ENCODE measurements at regions of chr6 and their contacts with region 1.

Region 1: GRCh38 chr6:42230345-42231321 is 13.0 kb upstream of the MRPS10 start:
- DNase-seq: peak in 1 of 2 experiments; percentile 29
- H3K4me3 ChIP-seq: no peak overlapping the region
- H3K4me3 Mint-ChIP-seq: no peak overlapping the region
- H3K27ac Mint-ChIP-seq: peak overlapping the region; percentile 4
- H3K4me1 ChIP-seq: peaks cover 28% of the 10 kb centered on the region
- H3K4me1 Mint-ChIP-seq: peaks cover 37% of the 10 kb centered on the region
- H3K27me3 ChIP-seq: no peaks in the 10 kb centered on the region
- H3K27me3 Mint-ChIP-seq: no peaks in the 10 kb centered on the region
- CTCF ChIP-seq: peak; percentile 57 to 76

Region 2: GRCh38 chr6:42075159-42075838 is 155.3 kb before region 1 on chr6:
- CTCF ChIA-PET with region 1: no interaction called
- POLR2A ChIA-PET with region 1: no interaction called
- intact Hi-C with region 1: loop called (anchors 1 kb)
- DNase-seq: peak; percentile 78 to 87
- H3K4me3 ChIP-seq: no peak overlapping the region
- H3K4me3 Mint-ChIP-seq: no peak overlapping the region
- H3K27ac Mint-ChIP-seq: no peak overlapping the region
- H3K4me1 ChIP-seq: no peaks in the 10 kb centered on the region
- H3K4me1 Mint-ChIP-seq: no peaks in the 10 kb centered on the region
- H3K27me3 ChIP-seq: no peaks in the 10 kb centered on the region
- H3K27me3 Mint-ChIP-seq: no peaks in the 10 kb centered on the region
- CTCF ChIP-seq: peak; percentile 83 to 89

Region 3: GRCh38 chr6:42142118-42142931 is 88.3 kb before region 1 on chr6 and contains the start of gene C6orf132:
- CTCF ChIA-PET with region 1: no interaction called
- POLR2A ChIA-PET with region 1: interaction called, 13 read pairs
- intact Hi-C with region 1: no loop called
- DNase-seq: peak; percentile 90
- H3K4me3 ChIP-seq: peak within 1 kb of the TSS; percentile 82
- H3K4me3 Mint-ChIP-seq: peak within 1 kb of the TSS; percentile 78
- H3K27ac Mint-ChIP-seq: peak within 1 kb of the TSS; percentile 95
- H3K4me1 ChIP-seq: peaks cover 44% of the 10 kb centered on the region
- H3K4me1 Mint-ChIP-seq: peaks cover 34% of the 10 kb centered on the region
- H3K27me3 ChIP-seq: no peaks in the 10 kb centered on the region
- H3K27me3 Mint-ChIP-seq: no peaks in the 10 kb centered on the region
- CTCF ChIP-seq: peak in 1 of 2 experiments; percentile 13
- total RNA-seq, gene C6orf132: 56.2 and 61.2 TPM in 2 replicates

Region 4: DNA sequence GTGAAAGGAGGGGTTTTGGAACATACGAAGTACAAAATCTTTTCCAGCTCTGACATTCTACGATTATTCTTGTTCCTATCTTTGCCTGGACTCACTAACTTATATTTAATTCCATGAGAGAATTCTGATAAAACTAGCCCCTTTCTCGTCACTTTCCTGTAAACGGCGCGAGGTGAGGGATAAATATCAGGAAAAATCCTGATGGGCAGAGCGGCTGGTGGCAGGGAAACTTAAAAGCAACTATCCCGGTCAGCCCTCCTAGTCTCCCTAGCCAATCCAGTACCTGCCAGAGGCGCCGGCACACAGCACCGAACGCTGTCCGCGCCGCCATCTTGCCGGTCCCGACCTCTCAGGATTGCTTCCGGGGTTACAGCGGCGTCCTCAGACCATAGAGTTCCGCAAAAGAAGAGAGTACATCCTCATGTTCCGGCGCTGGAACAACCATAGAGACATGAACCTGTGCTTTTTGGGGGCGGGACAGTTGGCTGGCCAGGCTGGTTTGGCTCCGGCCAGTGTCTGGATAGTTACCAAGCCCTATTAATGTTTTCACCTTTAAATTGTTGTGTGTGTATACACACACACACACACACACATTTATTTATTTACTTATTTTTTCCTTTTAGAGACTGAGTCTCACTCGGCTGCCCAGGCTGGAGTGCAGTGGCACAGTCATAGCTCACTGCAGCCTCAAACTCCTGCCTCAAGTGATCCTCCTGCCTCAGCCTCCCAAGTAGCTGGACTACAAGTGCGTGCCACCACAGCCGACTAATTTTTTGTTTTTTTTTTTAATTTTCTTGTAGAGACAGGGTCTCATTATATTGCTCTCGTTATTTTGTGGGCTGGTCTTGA is 12.9 kb before region 1 on chr6 and contains the start of gene MRPS10:
- CTCF ChIA-PET with region 1: interaction called, 16 read pairs
- POLR2A ChIA-PET with region 1: no interaction called
- intact Hi-C with region 1: loop called (anchors 1 kb)
- DNase-seq: peak; percentile 93 to 94
- H3K4me3 ChIP-seq: peak within 1 kb of the TSS; percentile 87
- H3K4me3 Mint-ChIP-seq: peak within 1 kb of the TSS; percentile 99
- H3K27ac Mint-ChIP-seq: peak within 1 kb of the TSS; percentile 99
- H3K4me1 ChIP-seq: peaks cover 7% of the 10 kb centered on the region
- H3K4me1 Mint-ChIP-seq: no peaks in the 10 kb centered on the region
- H3K27me3 ChIP-seq: no peaks in the 10 kb centered on the region
- H3K27me3 Mint-ChIP-seq: no peaks in the 10 kb centered on the region
- CTCF ChIP-seq: no peak
- total RNA-seq, gene MRPS10: 32.3 and 38.6 TPM in 2 replicates

Measured in Caco-2 (cell line).